CD14-positive monocyte (primary cell): ENCODE measurements at regions of chr16 and their contacts with region 1.

Region 1: GRCh38 chr16:10743610-10744393 is at the start of gene NUBP1:
- DNase-seq: peak; percentile 96 to 99 (median 99)
- H3K4me3 ChIP-seq: peak within 1 kb of the TSS; percentile 59 to 86 (median 75)
- H3K4me3 Mint-ChIP-seq: peak within 1 kb of the TSS; percentile 92 to 97
- H3K27ac ChIP-seq: peak within 1 kb of the TSS; percentile 98
- H3K27ac Mint-ChIP-seq: peak within 1 kb of the TSS; percentile 98 to 100 (median 100)
- H3K4me1 ChIP-seq: peaks cover 22 to 31% of the 10 kb centered on the region in 2 donors
- H3K4me1 Mint-ChIP-seq: peaks cover 35% of the 10 kb centered on the region
- H3K27me3 ChIP-seq: no peaks in the 10 kb centered on the region
- H3K27me3 Mint-ChIP-seq: peaks cover 0 to 3% (median 0%) of the 10 kb centered on the region in 3 donors
- CTCF ChIP-seq: no peak
- polyA plus RNA-seq, gene NUBP1: 52.8 to 56.6 (median 54.3) TPM

Region 2: DNA sequence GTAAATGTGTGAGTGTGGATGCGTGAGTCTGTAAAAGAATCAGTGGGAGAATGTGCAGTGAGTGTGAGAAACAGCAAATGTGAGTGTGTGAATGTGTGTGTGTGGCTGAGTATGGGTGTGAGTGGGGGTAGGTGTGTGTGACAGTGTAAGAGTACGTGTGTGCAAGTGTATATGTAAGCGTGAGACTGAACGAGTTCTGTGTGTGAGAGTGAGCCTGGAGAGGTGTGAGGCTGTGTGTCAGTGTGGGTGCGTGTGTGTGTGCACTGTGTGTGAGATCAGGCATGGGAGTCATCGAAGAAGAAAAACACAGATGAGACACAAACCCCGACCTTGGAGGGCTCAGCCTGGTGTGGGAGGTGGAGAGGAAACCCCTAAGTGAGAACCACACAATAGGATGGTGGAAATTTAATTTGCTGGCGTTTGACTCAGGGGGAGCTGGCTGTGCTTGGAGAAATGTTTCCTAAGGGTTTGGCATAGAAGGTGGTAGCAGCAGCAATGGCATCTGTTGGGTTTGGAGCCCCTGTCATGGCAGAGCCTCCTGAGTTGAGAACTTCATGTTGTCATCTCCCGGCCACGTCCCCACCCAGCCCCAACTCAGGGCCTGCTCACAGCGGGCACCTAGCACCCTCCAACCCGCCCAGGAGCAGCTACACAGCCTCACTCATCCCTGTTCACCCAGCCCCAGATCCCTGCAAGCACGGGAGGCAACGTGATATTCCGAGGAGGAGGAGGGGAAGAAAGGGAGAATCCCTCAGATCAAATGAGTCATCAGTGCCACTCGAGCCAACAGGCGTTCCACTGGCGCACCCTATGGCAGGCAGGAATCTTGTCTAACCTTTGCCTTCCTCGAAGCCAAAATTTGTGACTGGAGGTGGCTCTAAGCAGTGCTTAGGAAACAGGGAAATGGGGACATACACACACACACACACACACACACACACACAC is 14.4 kb before region 1 on chr16:
- intact Hi-C with region 1: no loop called
- DNase-seq: no peak
- H3K4me3 ChIP-seq: no peak overlapping the region
- H3K4me3 Mint-ChIP-seq: no peak overlapping the region
- H3K27ac ChIP-seq: no peak overlapping the region
- H3K27ac Mint-ChIP-seq: peak overlapping the region in 1 of 7 donors; percentile 6
- H3K4me1 ChIP-seq: no peaks in the 10 kb centered on the region
- H3K4me1 Mint-ChIP-seq: no peaks in the 10 kb centered on the region
- H3K27me3 ChIP-seq: no peaks in the 10 kb centered on the region
- H3K27me3 Mint-ChIP-seq: no peaks in the 10 kb centered on the region
- CTCF ChIP-seq: no peak

Region 3: DNA sequence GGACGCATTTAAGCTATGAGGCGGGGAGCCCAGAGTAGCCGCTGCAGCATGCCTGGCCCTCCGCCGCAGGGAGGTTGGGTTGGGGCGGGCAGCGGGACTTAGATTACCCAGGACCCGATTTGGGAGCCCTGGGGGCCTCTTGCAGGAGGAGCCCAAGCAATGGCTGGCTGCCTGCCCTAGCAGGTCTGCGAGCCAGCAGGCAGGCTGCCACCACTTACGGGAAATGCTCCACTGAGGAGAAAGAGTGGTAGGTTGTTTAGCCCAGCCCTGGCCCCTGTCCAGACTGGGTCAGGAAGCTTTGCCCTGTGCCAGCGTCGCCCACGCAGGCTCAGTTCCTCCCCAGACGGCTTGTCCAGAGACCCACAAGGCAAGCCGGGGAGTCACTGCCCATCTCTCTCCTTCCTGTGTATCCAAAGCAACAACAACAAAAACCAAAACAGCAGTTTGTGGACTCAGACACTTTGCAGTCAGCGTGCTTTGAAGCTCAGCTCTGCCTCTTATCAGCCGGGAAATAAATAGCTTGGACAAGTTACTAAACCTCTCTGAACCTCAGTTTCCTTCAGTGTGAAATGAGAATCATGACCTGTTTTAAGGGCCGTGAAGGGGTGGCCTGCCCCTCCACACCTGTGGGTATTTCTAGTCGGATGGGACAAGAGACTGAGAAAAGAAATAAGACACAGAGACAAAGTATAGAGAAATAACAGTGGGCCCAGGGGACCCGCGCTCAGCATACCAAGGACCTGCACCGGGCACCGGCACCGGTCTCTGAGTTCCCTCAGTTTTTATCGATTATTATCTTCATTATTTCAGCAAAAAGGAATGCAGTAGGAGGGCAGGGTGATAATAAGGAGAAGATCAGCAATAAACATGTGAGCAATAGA is 85.3 kb after region 1 on chr16:
- intact Hi-C with region 1: no loop called
- DNase-seq: peak; percentile 67 to 77 (median 75)
- H3K4me3 ChIP-seq: peak overlapping the region in 2 of 3 experiments; percentile 4 to 51
- H3K4me3 Mint-ChIP-seq: peak overlapping the region; percentile 63 to 84
- H3K27ac ChIP-seq: peak overlapping the region; percentile 9 to 53
- H3K27ac Mint-ChIP-seq: peak overlapping the region; percentile 42 to 92 (median 80)
- H3K4me1 ChIP-seq: peaks cover 22% of the 10 kb centered on the region in 2 donors
- H3K4me1 Mint-ChIP-seq: peaks cover 39% of the 10 kb centered on the region
- H3K27me3 ChIP-seq: no peaks in the 10 kb centered on the region
- H3K27me3 Mint-ChIP-seq: peaks cover 0 to 4% (median 4%) of the 10 kb centered on the region in 3 donors
- CTCF ChIP-seq: no peak

Region 4: DNA sequence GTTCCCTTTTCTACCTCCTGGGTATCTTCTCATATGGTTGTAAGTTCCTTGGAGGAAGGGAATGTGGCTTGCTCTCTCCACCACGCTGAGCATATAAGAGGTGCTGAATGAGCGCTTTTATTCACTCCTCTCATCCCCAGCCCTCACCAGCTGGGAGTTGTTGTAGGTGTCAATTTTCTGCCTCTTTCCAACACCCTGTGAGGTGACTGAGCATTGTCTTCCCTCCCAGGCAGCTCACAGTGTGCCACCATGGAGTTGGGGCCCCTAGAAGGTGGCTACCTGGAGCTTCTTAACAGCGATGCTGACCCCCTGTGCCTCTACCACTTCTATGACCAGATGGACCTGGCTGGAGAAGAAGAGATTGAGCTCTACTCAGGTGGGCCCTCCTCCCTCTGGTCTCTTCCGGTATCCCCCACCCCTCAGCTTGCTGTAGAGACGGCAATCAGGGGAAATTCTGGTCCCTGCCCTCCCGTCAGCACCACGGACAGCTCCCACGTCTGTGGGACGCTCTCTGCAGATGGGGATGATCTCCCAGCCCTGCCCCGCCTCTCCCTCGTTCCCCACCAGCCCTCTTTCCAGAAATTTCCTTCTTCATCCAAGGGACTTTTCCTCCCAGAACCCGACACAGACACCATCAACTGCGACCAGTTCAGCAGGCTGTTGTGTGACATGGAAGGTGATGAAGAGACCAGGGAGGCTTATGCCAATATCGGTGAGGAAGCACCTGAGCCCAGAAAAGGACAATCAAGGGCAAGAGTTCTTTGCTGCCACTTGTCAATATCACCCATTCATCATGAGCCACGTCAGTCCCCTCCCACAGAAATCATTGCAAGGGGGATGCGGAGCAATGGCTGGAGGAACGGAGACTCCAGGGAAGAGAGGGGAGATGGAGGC is 151.5 kb after region 1 on chr16:
- intact Hi-C with region 1: loop called in 1 of 2 experiments (anchors 10 kb)
- DNase-seq: no peak
- H3K4me3 ChIP-seq: peak overlapping the region in 1 of 3 experiments; percentile 55
- H3K4me3 Mint-ChIP-seq: no peak overlapping the region
- H3K27ac ChIP-seq: peak overlapping the region; percentile 34 to 77
- H3K27ac Mint-ChIP-seq: peak overlapping the region; percentile 68 to 94 (median 89)
- H3K4me1 ChIP-seq: peaks cover 73 to 77% of the 10 kb centered on the region in 2 donors
- H3K4me1 Mint-ChIP-seq: peaks cover 74% of the 10 kb centered on the region
- H3K27me3 ChIP-seq: no peaks in the 10 kb centered on the region
- H3K27me3 Mint-ChIP-seq: peaks cover 0 to 3% (median 0%) of the 10 kb centered on the region in 3 donors
- CTCF ChIP-seq: no peak

Region 5: GRCh38 chr16:10937068-10937859 is 193.5 kb after region 1 on chr16:
- intact Hi-C with region 1: loop called (anchors 5 to 10 kb)
- DNase-seq: no peak
- H3K4me3 ChIP-seq: peak overlapping the region in 1 of 3 experiments; percentile 29
- H3K4me3 Mint-ChIP-seq: peak overlapping the region; percentile 40 to 51
- H3K27ac ChIP-seq: peak overlapping the region in 1 of 2 donors; percentile 25
- H3K27ac Mint-ChIP-seq: peak overlapping the region in 2 of 7 donors; percentile 23 to 63
- H3K4me1 ChIP-seq: peaks cover 54 to 63% of the 10 kb centered on the region in 2 donors
- H3K4me1 Mint-ChIP-seq: peaks cover 71% of the 10 kb centered on the region
- H3K27me3 ChIP-seq: no peaks in the 10 kb centered on the region
- H3K27me3 Mint-ChIP-seq: peaks cover 2 to 7% (median 4%) of the 10 kb centered on the region in 3 donors
- CTCF ChIP-seq: no peak

Region 6: DNA sequence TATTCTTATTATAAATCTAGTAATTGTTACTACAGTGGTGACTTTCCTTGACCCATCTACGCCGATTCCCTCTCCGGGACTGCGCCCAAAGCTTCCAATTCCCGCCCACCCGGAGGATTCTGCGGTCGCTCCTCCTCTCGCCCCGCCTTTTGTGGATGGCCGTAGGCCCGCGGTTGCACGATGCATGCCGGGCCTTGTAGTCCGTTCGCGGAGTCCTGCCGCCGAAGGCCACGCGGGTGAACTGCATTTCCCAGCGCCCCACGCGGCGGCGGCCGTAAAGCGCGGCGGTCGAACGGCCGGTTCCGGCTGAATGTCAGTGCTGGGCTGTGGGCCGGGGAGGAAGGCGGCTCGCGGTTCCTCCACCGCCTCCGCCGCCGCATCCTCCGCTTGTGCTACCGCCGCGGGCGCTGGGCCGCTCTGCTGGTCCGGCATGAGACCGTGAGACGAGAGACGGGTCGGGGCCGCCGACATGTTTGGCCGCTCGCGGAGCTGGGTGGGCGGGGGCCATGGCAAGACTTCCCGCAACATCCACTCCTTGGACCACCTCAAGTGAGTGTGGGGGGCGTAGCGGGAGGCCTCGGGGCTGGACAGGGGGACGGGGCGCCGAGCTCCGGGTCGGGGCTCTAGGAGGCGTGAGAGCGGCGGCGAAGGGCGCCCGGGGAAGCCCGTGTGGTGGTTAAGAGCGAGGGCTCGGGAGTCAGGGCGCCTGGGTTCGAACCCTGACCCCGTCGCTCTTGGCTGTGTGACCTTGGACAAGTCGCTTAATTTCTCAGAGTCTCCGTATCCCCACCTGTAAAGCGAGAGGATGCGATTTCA is 200.7 kb after region 1 on chr16 and contains the start of gene CLEC16A:
- intact Hi-C with region 1: loop called (anchors 5 to 10 kb)
- DNase-seq: peak; percentile 93 to 94 (median 93)
- H3K4me3 ChIP-seq: peak within 1 kb of the TSS; percentile 59 to 94 (median 70)
- H3K4me3 Mint-ChIP-seq: peak within 1 kb of the TSS; percentile 84 to 90
- H3K27ac ChIP-seq: peak within 1 kb of the TSS in 1 of 2 donors; percentile 82
- H3K27ac Mint-ChIP-seq: peak within 1 kb of the TSS in 6 of 7 donors; percentile 13 to 89 (median 78)
- H3K4me1 ChIP-seq: peaks cover 53 to 67% of the 10 kb centered on the region in 2 donors
- H3K4me1 Mint-ChIP-seq: peaks cover 62% of the 10 kb centered on the region
- H3K27me3 ChIP-seq: no peaks in the 10 kb centered on the region
- H3K27me3 Mint-ChIP-seq: peaks cover 3 to 8% (median 4%) of the 10 kb centered on the region in 3 donors
- CTCF ChIP-seq: no peak
- polyA plus RNA-seq, gene CLEC16A: 3.4 to 12.0 (median 5.8) TPM